Sigmoid colon (tissue), 7 donors: ENCODE measurements at regions of chr1 and their contacts with region 1.

Region 1: GRCh38 chr1:169546087-169546995 is 39.9 kb downstream of the F5 start:
- DNase-seq: peak; percentile 73
- H3K4me3 ChIP-seq: no peak overlapping the region
- H3K27ac ChIP-seq: no peak overlapping the region
- H3K4me1 ChIP-seq: no peaks in the 10 kb centered on the region
- H3K27me3 ChIP-seq: no peaks in the 10 kb centered on the region
- CTCF ChIP-seq: peak; percentile 76 to 84 (median 78)
- EP300 ChIP-seq: no peak
- POLR2A ChIP-seq: no peak

Region 2: DNA sequence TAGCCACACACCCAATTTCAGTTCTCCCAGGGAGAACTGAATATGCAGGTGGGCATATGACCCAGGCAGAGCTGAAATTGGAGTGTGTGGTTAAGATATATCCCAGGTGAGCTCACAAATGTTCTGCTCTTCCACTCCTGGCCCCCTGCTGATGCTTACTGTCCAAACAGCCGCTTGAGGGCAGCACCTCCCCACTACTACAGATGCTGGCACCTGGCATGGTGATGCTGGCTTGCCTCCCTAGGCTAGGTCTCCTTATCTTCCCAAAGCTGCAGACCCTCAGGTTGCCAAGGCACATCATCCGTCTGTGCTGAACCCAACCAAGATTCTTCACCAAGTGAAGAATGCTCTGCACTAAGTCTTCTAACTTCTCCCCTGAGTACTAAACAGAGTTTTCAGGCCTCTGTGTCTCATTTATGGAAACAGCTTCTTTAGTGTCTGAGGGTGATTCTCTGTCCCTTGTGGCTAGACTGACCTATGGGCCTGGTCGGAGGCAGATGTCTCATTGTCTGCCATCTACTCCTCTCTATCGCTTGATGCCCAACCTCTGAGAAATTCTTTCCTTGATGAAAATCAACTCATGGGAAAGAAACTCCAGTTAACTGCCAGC is 942.7 kb before region 1 on chr1:
- intact Hi-C with region 1: loop called (anchors 10 kb)
- DNase-seq: peak; percentile 88
- H3K4me3 ChIP-seq: no peak overlapping the region
- H3K27ac ChIP-seq: peak overlapping the region in 1 of 4 donors; percentile 14
- H3K4me1 ChIP-seq: peaks cover 0 to 45% (median 15%) of the 10 kb centered on the region in 4 donors
- H3K27me3 ChIP-seq: no peaks in the 10 kb centered on the region
- CTCF ChIP-seq: peak; percentile 72 to 85 (median 79)
- EP300 ChIP-seq: no peak
- POLR2A ChIP-seq: no peak

Region 3: GRCh38 chr1:169003864-169004516 is 542.4 kb before region 1 on chr1:
- intact Hi-C with region 1: no loop called
- DNase-seq: peak; percentile 71
- H3K4me3 ChIP-seq: no peak overlapping the region
- H3K27ac ChIP-seq: peak overlapping the region in 1 of 4 donors; percentile 16
- H3K4me1 ChIP-seq: peaks cover 0 to 11% (median 8%) of the 10 kb centered on the region in 4 donors
- H3K27me3 ChIP-seq: no peaks in the 10 kb centered on the region
- CTCF ChIP-seq: no peak
- EP300 ChIP-seq: no peak
- POLR2A ChIP-seq: no peak

Region 4: GRCh38 chr1:169367486-169368405 is 178.6 kb before region 1 on chr1 and contains the starts of genes BLZF1 and NME7:
- intact Hi-C with region 1: loop called (anchors 5 kb)
- DNase-seq: peak; percentile 98
- H3K4me3 ChIP-seq: peak within 1 kb of the TSS; percentile 59 to 72 (median 66)
- H3K27ac ChIP-seq: peak within 1 kb of the TSS; percentile 78 to 83 (median 82)
- H3K4me1 ChIP-seq: peaks cover 2 to 33% (median 26%) of the 10 kb centered on the region in 4 donors
- H3K27me3 ChIP-seq: no peaks in the 10 kb centered on the region
- CTCF ChIP-seq: no peak
- EP300 ChIP-seq: peak in 1 of 4 donors; percentile 32
- POLR2A ChIP-seq: peak in 1 of 2 donors; percentile 43
- total RNA-seq, gene BLZF1: 31.0 to 49.5 (median 38.7) TPM
- total RNA-seq, gene NME7: 20.1 to 39.9 (median 32.1) TPM

Region 5: GRCh38 chr1:169466259-169467230 is 79.8 kb before region 1 on chr1:
- intact Hi-C with region 1: loop called (anchors 1 kb)
- DNase-seq: no peak
- H3K4me3 ChIP-seq: no peak overlapping the region
- H3K27ac ChIP-seq: no peak overlapping the region
- H3K4me1 ChIP-seq: no peaks in the 10 kb centered on the region
- H3K27me3 ChIP-seq: no peaks in the 10 kb centered on the region
- CTCF ChIP-seq: peak in 3 of 4 experiments; percentile 10 to 35 (median 35)
- EP300 ChIP-seq: no peak
- POLR2A ChIP-seq: no peak

Region 6: GRCh38 chr1:169485544-169486278 is 60.6 kb before region 1 on chr1 and contains the start of gene SLC19A2:
- intact Hi-C with region 1: loop called (anchors 5 kb)
- DNase-seq: peak; percentile 100
- H3K4me3 ChIP-seq: peak within 1 kb of the TSS; percentile 78 to 92 (median 84)
- H3K27ac ChIP-seq: peak within 1 kb of the TSS; percentile 97 to 100 (median 99)
- H3K4me1 ChIP-seq: peaks cover 7 to 46% (median 38%) of the 10 kb centered on the region in 4 donors
- H3K27me3 ChIP-seq: no peaks in the 10 kb centered on the region
- CTCF ChIP-seq: peak in 1 of 4 experiments; percentile 17
- EP300 ChIP-seq: peak; percentile 96 to 100 (median 97)
- POLR2A ChIP-seq: peak; percentile 88 to 90
- total RNA-seq, gene SLC19A2: 21.0 to 31.3 (median 27.2) TPM

Region 7: GRCh38 chr1:169711469-169712281 is 165.3 kb after region 1 on chr1 and contains the start of gene SELL:
- intact Hi-C with region 1: no loop called
- DNase-seq: peak; percentile 65
- H3K4me3 ChIP-seq: peak within 1 kb of the TSS in 2 of 4 donors; percentile 13 to 31
- H3K27ac ChIP-seq: no peak within 1 kb of the TSS
- H3K4me1 ChIP-seq: peaks cover 0 to 6% (median 0%) of the 10 kb centered on the region in 4 donors
- H3K27me3 ChIP-seq: no peaks in the 10 kb centered on the region
- CTCF ChIP-seq: peak; percentile 18 to 61 (median 58)
- EP300 ChIP-seq: no peak
- POLR2A ChIP-seq: no peak
- total RNA-seq, gene SELL: 0.55 to 1.5 (median 0.77) TPM

Region 8: GRCh38 chr1:169809370-169810095 is 263.2 kb after region 1 on chr1:
- intact Hi-C with region 1: loop called (anchors 5 kb)
- DNase-seq: no peak
- H3K4me3 ChIP-seq: no peak overlapping the region
- H3K27ac ChIP-seq: no peak overlapping the region
- H3K4me1 ChIP-seq: no peaks in the 10 kb centered on the region
- H3K27me3 ChIP-seq: no peaks in the 10 kb centered on the region
- CTCF ChIP-seq: peak in 3 of 4 experiments; percentile 24 to 45 (median 38)
- EP300 ChIP-seq: no peak
- POLR2A ChIP-seq: no peak

Region 9: DNA sequence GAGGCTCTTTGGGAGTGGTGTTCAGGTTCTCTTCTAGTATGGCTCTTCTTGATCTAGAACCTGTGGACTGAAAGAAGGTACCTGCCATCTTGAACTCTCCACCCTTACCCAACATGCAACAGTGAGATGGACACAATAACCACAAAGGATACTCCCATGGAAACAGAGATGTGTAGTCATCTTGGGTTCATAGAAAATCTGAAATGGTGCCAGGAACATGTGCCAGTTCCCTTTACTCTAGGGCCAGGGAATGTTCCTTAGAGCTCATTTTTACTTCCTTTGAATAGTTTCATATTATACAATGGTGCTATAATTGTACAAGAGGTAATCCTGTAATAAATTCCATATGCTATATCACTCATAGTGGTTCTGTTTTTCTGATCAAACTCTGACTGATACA is 360.6 kb after region 1 on chr1:
- intact Hi-C with region 1: no loop called
- DNase-seq: no peak
- H3K4me3 ChIP-seq: no peak overlapping the region
- H3K27ac ChIP-seq: no peak overlapping the region
- H3K4me1 ChIP-seq: no peaks in the 10 kb centered on the region
- H3K27me3 ChIP-seq: peaks cover 0 to 6% (median 0%) of the 10 kb centered on the region in 3 donors
- CTCF ChIP-seq: no peak
- EP300 ChIP-seq: no peak
- POLR2A ChIP-seq: no peak